ENCODE measurements at regions of chr12 and their contacts with region 1.

Region 1: DNA sequence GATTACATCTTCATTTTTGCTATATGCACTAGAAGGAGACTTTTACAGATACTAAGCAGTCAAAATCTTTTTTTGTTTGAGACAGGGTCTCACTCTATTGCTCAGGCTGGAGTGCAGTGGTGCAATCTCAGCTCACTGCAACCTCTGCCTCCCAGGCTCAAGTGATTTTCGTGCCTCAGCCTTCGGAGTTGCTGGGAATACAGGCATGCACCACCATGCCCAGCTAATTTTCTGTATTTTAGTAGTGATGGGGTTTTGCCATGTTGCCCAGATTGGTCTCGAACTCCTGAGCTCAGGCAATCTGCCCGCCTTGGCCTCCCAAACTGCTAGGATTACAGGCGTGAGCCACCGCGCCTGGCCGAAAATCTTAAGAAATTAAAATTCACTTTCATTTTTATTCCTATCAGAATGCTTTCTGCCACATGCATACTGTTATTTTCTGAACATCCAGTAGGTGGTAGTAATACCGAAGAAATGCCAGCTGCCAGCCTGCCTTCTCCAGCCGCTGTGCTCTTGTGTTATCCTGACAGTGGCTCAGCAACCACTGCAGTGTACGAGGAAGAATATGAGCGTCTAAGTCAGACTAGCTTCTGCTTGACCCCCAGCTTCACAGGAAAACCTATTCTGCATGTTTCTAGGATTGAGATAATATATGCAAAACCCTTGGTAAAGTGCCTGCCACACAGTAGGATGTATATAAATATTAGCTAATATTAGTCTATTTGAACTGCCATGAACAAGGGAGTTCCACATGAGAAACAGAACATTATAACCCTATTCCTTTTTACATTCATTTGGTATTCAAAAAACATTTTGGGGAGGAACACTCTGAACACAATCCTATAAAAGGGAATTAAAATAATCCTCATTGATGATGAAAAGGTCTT is 54.2 kb downstream of the RPAP3 start:
- DNase-seq: peak in 1 of 2 donors; percentile 72
- H3K4me3 ChIP-seq: peak overlapping the region in 1 of 2 donors; percentile 48
- H3K27ac ChIP-seq: peak overlapping the region; percentile 6 to 29
- H3K4me1 ChIP-seq: peaks cover 0 to 2% of the 10 kb centered on the region in 2 donors
- H3K27me3 ChIP-seq: no peaks in the 10 kb centered on the region
- CTCF ChIP-seq: peak; percentile 66 to 86 (median 74)

Region 2: GRCh38 chr12:47449797-47450196 is 201.8 kb before region 1 on chr12:
- intact Hi-C with region 1: no loop called
- DNase-seq: no peak
- H3K4me3 ChIP-seq: no peak overlapping the region
- H3K27ac ChIP-seq: no peak overlapping the region
- H3K4me1 ChIP-seq: no peaks in the 10 kb centered on the region
- H3K27me3 ChIP-seq: no peaks in the 10 kb centered on the region
- CTCF ChIP-seq: no peak

Region 3: DNA sequence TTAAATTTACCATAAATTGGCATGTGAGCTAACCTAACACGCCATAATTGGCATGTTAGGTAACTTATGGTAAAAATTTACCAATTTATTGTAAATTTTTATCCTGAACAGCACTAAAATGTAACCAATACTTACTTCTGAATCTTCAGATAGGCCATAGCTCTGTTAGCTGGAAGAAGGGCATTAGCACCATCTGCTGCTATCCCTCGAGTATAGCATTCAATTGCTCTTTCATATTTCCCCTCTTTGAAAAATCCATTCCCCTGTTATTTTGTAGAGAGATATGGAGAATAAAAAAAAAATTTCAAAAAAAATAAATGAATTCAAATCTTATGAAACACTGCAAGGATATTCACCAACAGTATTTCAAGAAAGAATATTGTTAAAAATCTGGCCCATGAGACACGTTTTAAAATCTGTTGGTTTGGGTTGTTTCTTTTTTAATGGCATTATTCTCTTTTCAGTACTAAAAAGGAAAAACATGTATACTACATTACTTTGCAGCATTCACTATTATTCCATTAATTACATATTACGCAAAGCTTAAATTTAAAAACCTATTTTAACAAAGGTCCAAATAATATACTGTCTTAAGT is 35.1 kb after region 1 on chr12:
- intact Hi-C with region 1: loop called (anchors 5 kb)
- DNase-seq: no peak
- H3K4me3 ChIP-seq: no peak overlapping the region
- H3K27ac ChIP-seq: no peak overlapping the region
- H3K4me1 ChIP-seq: no peaks in the 10 kb centered on the region
- H3K27me3 ChIP-seq: no peaks in the 10 kb centered on the region
- CTCF ChIP-seq: peak; percentile 44 to 64 (median 47)

Region 4: DNA sequence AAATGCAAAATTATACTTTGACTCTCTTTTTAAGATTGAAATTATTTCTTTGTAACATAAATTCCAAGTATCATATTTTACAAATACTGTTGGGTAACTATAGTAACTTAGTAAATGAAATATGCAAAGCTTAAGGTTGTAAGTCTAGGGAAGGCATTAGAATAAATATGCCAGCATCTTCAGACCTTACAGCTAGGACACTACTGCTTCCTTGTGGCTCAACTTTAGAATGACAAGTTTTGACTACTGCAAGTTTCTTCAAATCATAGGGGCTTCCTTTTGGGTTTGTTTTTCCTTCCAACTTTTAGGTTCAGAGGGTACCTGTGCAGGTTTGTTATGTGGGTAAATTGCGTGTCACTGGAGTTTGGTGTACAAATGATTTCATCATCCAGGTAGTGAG is 803.1 kb after region 1 on chr12:
- intact Hi-C with region 1: no loop called
- DNase-seq: no peak
- H3K4me3 ChIP-seq: no peak overlapping the region
- H3K27ac ChIP-seq: no peak overlapping the region
- H3K4me1 ChIP-seq: no peaks in the 10 kb centered on the region
- H3K27me3 ChIP-seq: no peaks in the 10 kb centered on the region
- CTCF ChIP-seq: peak in 1 of 3 experiments; percentile 59

Measured in ascending aorta (tissue), 2 donors.